H1 (cell line): ENCODE measurements at regions of chr1 and their contacts with region 1.

Region 1: DNA sequence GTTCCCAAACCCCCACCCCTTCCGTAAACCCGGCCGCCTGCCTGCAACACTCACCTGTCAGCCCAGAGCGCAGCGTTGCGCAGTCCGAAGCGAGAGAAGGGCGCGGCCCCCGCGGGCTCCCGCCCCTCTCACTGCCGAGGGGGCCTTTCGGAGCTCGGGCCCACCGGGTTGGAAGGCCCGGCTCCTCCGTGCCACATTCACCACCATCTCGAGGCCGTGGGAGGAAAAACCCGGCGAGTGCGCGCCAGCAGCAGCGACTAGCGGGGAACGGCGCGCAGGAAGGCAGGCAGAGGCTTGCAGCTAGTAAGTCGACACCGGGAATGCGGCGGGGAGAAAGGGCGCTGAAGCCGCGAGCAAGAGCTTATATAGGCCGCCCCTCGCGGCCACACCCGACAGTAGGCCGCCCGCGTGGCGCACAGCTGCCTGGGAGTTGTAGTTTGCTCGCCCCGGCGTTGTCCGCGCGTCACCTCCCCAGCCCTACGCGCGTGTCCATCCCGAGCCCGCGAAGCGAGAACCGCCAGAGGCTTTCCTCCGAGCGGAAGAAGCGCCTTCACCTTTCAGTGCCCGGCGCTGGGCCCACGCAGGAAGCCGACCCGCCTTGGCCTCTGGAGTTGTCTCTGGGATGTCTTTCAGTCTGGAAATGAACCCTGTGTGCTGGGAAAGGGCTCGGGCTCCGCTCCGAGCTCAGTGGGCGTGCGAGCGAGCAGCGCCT is 10.4 kb upstream of the RAB42 start:
- DNase-seq: peak; percentile 79 to 99
- H3K4me3 ChIP-seq: peak overlapping the region; percentile 86 to 97 (median 92)
- H3K27ac ChIP-seq: peak overlapping the region; percentile 30; the same call in 1 of the 2 replicates
- H3K4me1 ChIP-seq: peaks cover 0 to 11% (median 6%) of the 10 kb centered on the region in 4 experiments; a peak in 4 of 7 replicates
- H3K27me3 ChIP-seq: peaks cover 0 to 4% (median 2%) of the 10 kb centered on the region in 4 experiments; a peak in 2 of 7 replicates
- CTCF ChIP-seq: no peak
- EP300 ChIP-seq: no peak
- POLR2A ChIP-seq: peak; percentile 100
- RAD21 ChIP-seq: peak in 1 of 2 experiments; percentile 3; a peak in 1 of 4 replicates

Region 2: DNA sequence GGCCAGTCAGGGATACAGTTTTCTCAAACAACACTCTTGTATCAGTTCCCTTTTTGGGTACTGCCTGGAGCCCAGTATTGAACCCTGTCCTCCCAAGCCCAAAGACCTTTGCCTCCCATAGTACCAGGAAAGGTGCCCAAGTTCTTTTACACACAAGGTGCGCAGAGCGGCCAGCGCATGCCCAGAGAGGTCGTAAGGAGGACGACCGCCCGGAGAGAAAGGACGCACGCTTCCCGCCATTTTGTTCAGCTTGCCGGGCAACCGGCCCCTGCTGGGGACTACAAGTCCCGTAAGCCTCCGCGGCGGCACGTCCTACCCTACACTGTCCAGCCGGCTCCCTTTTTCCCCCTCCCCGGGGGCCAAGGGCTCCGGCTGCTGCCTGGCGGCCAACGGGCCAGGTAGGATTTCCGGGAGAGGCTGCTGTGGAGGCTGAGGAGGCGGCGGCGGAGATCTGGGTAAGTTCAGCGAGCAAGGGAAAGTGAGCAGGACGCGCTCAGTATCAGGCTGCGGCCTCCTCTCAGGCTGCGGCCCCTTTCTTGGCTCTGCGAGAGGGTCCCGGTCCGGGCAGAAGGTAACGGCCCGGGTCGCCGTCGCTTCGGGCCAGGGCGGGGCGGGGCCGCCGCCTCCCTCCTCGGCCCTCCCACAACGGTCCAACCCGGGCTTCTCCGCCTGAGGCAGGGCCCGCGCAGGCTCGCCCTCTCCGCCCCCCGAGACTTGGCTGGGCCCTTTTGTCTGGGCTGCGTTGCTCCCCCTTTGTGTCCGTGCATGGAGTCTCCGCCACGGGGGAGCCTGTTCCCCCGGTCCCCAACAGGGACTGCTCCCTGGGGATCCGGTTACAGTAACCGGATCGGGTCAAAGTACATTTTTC is 212.1 kb before region 1 on chr1 and contains the start of gene PHACTR4:
- CTCF ChIA-PET with region 1: no interaction called
- POLR2A ChIA-PET with region 1: interaction called, 11 read pairs
- DNase-seq: peak; percentile 90 to 96
- H3K4me3 ChIP-seq: peak within 1 kb of the TSS; percentile 74 to 86 (median 79)
- H3K27ac ChIP-seq: peak within 1 kb of the TSS; percentile 82
- H3K4me1 ChIP-seq: no peaks in the 10 kb centered on the region; a peak in 1 of 7 replicates
- H3K27me3 ChIP-seq: no peaks in the 10 kb centered on the region
- CTCF ChIP-seq: no peak
- EP300 ChIP-seq: no peak
- POLR2A ChIP-seq: peak; percentile 84 to 93
- RAD21 ChIP-seq: no peak
- total RNA-seq, gene PHACTR4: 54.1 and 57.8 TPM in 2 replicates

Region 3: GRCh38 chr1:28552758-28553663 is 28.7 kb before region 1 on chr1 and contains the start of gene TRNAU1AP:
- CTCF ChIA-PET with region 1: interaction called, 4 read pairs
- POLR2A ChIA-PET with region 1: interaction called, 552 read pairs
- DNase-seq: peak; percentile 82 to 98
- H3K4me3 ChIP-seq: peak within 1 kb of the TSS; percentile 72 to 96 (median 90)
- H3K27ac ChIP-seq: peak within 1 kb of the TSS; percentile 49
- H3K4me1 ChIP-seq: no peaks in the 10 kb centered on the region
- H3K27me3 ChIP-seq: no peaks in the 10 kb centered on the region
- CTCF ChIP-seq: no peak
- EP300 ChIP-seq: peak in 1 of 2 experiments; percentile 65; a peak in 1 of 3 replicates
- POLR2A ChIP-seq: no peak; a peak in 1 of 3 replicates
- RAD21 ChIP-seq: peak; percentile 2 to 18; a peak in 1 of 4 replicates
- total RNA-seq, gene TRNAU1AP: 30.8 and 35.2 TPM in 2 replicates

Region 4: GRCh38 chr1:28602536-28603439 is 21.1 kb after region 1 on chr1:
- CTCF ChIA-PET with region 1: interaction called, 73 read pairs
- POLR2A ChIA-PET with region 1: interaction called, 473 read pairs
- DNase-seq: peak in 1 of 2 experiments; percentile 63
- H3K4me3 ChIP-seq: no peak overlapping the region
- H3K27ac ChIP-seq: no peak overlapping the region; the same call in 1 of the 2 replicates
- H3K4me1 ChIP-seq: 0 out of 7 replicates have a peak, but pooled peaks cover 0 to 2% (median 0%) of the 10 kb centered on the region in 4 experiments
- H3K27me3 ChIP-seq: no peaks in the 10 kb centered on the region
- CTCF ChIP-seq: peak in 2 of 3 experiments; percentile 72; a peak in 3 of 4 replicates
- EP300 ChIP-seq: no peak
- POLR2A ChIP-seq: no peak
- RAD21 ChIP-seq: peak; percentile 89 to 92

Region 5: GRCh38 chr1:28648474-28649198 is 66.9 kb after region 1 on chr1 and contains the start of gene RNU11:
- CTCF ChIA-PET with region 1: interaction called, 3 read pairs
- POLR2A ChIA-PET with region 1: interaction called, 63 read pairs
- DNase-seq: peak; percentile 75 to 90
- H3K4me3 ChIP-seq: peak within 1 kb of the TSS; percentile 41 to 57 (median 45)
- H3K27ac ChIP-seq: peak within 1 kb of the TSS; percentile 99
- H3K4me1 ChIP-seq: peaks cover 0 to 4% (median 0%) of the 10 kb centered on the region in 4 experiments; a peak in 4 of 7 replicates
- H3K27me3 ChIP-seq: no peaks in the 10 kb centered on the region
- CTCF ChIP-seq: no peak
- EP300 ChIP-seq: peak in 1 of 2 experiments; percentile 73; a peak in 2 of 3 replicates
- POLR2A ChIP-seq: peak; percentile 100
- RAD21 ChIP-seq: 0 out of 4 replicates have a peak, but pooled peaks of 1 of the 2 experiments have one; percentile 8
- total RNA-seq, gene RNU11: not detected in 2 replicates